A673 (cell line): ENCODE measurements at regions of chr2 and their contacts with region 1.

Region 1: GRCh38 chr2:225137971-225138370 is 95.7 kb upstream of the DOCK10 start:
- DNase-seq: no peak
- H3K4me3 ChIP-seq: no peak overlapping the region
- H3K27ac ChIP-seq: no peak overlapping the region
- H3K4me1 ChIP-seq: no peaks in the 10 kb centered on the region
- H3K27me3 ChIP-seq: no peaks in the 10 kb centered on the region
- CTCF ChIP-seq: no peak

Region 2: GRCh38 chr2:224938651-224939182 is 199.3 kb before region 1 on chr2:
- CTCF ChIA-PET with region 1: no interaction called
- POLR2A ChIA-PET with region 1: no interaction called
- intact Hi-C with region 1: no loop called
- DNase-seq: no peak
- H3K4me3 ChIP-seq: no peak overlapping the region
- H3K27ac ChIP-seq: no peak overlapping the region
- H3K4me1 ChIP-seq: peaks cover 7% of the 10 kb centered on the region
- H3K27me3 ChIP-seq: no peaks in the 10 kb centered on the region
- CTCF ChIP-seq: no peak

Region 3: DNA sequence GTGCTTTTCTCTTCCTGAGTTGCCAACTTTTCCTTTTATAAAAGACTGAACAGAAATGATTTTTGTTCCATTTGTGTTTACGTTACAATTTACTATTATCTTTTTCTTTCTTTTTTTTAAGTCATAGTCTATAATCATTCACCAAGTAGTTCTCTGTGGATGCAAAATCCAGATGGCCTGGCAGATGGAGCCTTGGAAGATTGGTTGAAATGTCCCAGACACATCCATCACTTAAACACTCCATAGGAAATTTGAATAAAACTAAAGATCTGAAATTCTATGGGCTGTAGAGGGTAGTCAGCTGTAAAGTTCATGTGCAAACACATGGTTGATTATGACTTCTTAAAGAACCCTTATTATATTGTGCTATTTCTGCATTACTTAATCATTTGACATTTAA is 69.1 kb after region 1 on chr2:
- CTCF ChIA-PET with region 1: no interaction called
- POLR2A ChIA-PET with region 1: no interaction called
- intact Hi-C with region 1: no loop called
- DNase-seq: no peak
- H3K4me3 ChIP-seq: no peak overlapping the region
- H3K27ac ChIP-seq: no peak overlapping the region
- H3K4me1 ChIP-seq: no peaks in the 10 kb centered on the region
- H3K27me3 ChIP-seq: no peaks in the 10 kb centered on the region
- CTCF ChIP-seq: no peak

Region 4: GRCh38 chr2:225411452-225411851 is 273.5 kb after region 1 on chr2:
- CTCF ChIA-PET with region 1: no interaction called
- POLR2A ChIA-PET with region 1: no interaction called
- intact Hi-C with region 1: loop called (anchors 10 kb)
- DNase-seq: peak; percentile 4
- H3K4me3 ChIP-seq: no peak overlapping the region
- H3K27ac ChIP-seq: no peak overlapping the region
- H3K4me1 ChIP-seq: no peaks in the 10 kb centered on the region
- H3K27me3 ChIP-seq: peaks cover 7% of the 10 kb centered on the region
- CTCF ChIP-seq: 0 out of 2 replicates have a peak, but pooled peaks have one; percentile 28